Heart left ventricle (tissue), 16 donors: ENCODE measurements at regions of chr1 and their contacts with region 1.

Region 1: DNA sequence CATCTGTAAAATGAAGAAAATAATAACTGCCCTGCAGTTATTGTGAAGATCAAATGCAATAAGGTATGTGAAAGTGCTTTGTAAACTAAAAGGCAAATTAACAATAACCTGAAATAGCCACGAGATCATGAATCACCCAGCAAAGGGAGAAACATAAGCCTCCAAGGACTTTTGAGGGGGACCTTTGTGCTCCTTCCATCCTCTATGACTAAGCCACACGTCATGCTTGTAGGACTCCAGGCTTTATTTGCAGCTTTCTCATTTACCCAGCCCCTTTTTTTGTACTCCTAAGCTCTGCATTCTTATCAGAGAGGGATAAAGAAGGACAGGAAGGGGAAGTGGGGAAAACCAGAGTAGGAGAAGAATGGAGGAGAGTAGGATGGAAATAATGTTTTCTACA is 115.1 kb downstream of the PROX1 start:
- DNase-seq: no peak
- ATAC-seq: no peak
- H3K4me3 ChIP-seq: no peak overlapping the region
- H3K27ac ChIP-seq: no peak overlapping the region
- H3K4me1 ChIP-seq: peaks cover 0 to 25% (median 3%) of the 10 kb centered on the region in 12 donors
- H3K27me3 ChIP-seq: peaks cover 0 to 3% (median 0%) of the 10 kb centered on the region in 9 donors
- CTCF ChIP-seq: no peak
- POLR2A ChIP-seq: no peak

Region 2: DNA sequence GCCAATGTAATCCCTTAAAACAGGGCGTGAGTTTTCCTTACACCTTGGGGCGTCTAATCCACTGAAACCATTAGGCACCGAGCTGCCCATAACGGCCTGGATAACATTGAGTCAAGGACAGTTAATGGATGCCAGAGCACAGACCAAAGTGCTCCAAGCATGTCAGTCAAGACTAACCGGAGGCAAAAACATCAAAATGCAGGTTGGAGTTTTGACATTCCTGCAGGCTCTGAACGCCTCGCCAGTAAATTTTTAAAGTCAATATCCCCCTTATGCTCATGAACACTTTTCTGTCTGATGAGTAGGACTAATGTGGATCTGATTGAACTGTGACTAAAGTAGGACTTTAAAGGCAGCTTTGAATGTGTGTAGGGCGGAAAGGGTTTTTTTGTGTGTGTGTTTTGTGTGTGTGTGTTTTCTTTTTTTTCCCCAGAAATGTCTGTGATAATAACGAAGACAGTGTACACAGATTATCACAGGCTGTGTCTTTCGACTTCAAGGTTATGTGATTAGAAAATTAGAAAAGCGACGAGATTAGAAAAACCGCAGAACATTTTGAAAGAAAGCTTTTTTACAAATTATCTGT is 309.3 kb before region 1 on chr1:
- intact Hi-C with region 1: no loop called
- DNase-seq: no peak
- ATAC-seq: no peak
- H3K4me3 ChIP-seq: no peak overlapping the region
- H3K27ac ChIP-seq: no peak overlapping the region
- H3K4me1 ChIP-seq: no peaks in the 10 kb centered on the region
- H3K27me3 ChIP-seq: no peaks in the 10 kb centered on the region
- CTCF ChIP-seq: no peak
- POLR2A ChIP-seq: no peak

Region 3: GRCh38 chr1:213996320-213997037 is 106.4 kb before region 1 on chr1:
- intact Hi-C with region 1: loop called in 1 of 10 experiments (anchors 5 kb)
- DNase-seq: peak in 3 of 5 donors; percentile 48 to 63 (median 62)
- ATAC-seq: peak; percentile 25 to 77 (median 59)
- H3K4me3 ChIP-seq: peak overlapping the region in 9 of 12 donors; percentile 12 to 55 (median 33)
- H3K27ac ChIP-seq: peak overlapping the region in 10 of 12 donors; percentile 0 to 62 (median 44)
- H3K4me1 ChIP-seq: peaks cover 0 to 24% (median 7%) of the 10 kb centered on the region in 12 donors
- H3K27me3 ChIP-seq: no peaks in the 10 kb centered on the region
- CTCF ChIP-seq: no peak
- POLR2A ChIP-seq: no peak

Region 4: GRCh38 chr1:214029796-214030195 is 73.1 kb before region 1 on chr1:
- intact Hi-C with region 1: loop called in 4 of 10 experiments (anchors 1 to 5 kb)
- DNase-seq: peak in 2 of 5 donors; percentile 30 to 35
- ATAC-seq: peak; percentile 77 to 89 (median 85)
- H3K4me3 ChIP-seq: no peak overlapping the region
- H3K27ac ChIP-seq: peak overlapping the region; percentile 77 to 97 (median 92)
- H3K4me1 ChIP-seq: peaks cover 0 to 49% (median 7%) of the 10 kb centered on the region in 12 donors
- H3K27me3 ChIP-seq: no peaks in the 10 kb centered on the region
- CTCF ChIP-seq: no peak
- POLR2A ChIP-seq: no peak

Region 5: DNA sequence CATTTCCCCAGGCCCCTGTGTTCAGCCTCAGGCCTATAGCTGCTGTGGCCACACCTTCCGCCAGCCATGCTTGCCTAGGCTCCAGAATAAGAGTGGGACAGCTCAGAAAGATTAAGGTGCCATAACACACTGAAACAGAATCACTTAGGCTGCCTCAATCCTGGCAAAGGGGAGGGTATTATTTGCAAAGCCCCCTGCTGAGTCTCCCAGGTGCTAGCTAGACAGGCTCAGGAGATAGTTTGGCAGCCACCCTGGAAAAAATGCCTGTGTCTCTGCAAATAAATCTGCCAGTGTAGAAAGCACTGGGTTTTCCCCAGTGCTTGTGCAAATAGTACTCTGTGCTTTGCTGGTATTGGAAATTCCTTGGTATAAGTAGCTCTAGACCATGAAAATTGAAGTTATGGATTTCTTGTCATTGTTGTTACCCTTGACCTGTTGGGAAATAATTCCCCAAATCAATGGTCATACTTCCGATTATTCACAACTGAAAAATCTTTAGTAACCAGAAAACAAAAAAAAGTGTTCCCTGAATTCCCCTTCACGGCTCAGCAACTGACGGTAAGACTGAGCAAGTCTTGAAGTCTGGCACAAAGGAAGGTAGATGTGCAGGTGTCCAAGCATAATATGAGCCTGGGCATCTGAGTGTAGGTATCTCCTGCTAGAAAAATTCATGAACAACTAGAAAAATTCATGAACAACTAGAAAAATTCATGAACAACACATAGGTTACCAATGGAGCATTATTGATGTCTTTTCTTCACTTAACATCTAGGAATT is 58.3 kb before region 1 on chr1:
- intact Hi-C with region 1: loop called in 2 of 10 experiments (anchors 5 to 10 kb)
- DNase-seq: peak in 1 of 5 donors; percentile 58
- ATAC-seq: peak in 2 of 4 donors; percentile 48 to 74
- H3K4me3 ChIP-seq: no peak overlapping the region
- H3K27ac ChIP-seq: peak overlapping the region in 5 of 12 donors; percentile 35 to 66 (median 38)
- H3K4me1 ChIP-seq: peaks cover 0 to 6% (median 0%) of the 10 kb centered on the region in 12 donors
- H3K27me3 ChIP-seq: peaks cover 0 to 3% (median 0%) of the 10 kb centered on the region in 9 donors
- CTCF ChIP-seq: no peak
- POLR2A ChIP-seq: no peak

Region 6: GRCh38 chr1:214050513-214051401 is 52.1 kb before region 1 on chr1:
- intact Hi-C with region 1: loop called in 3 of 10 experiments (anchors 2 to 10 kb)
- DNase-seq: no peak
- ATAC-seq: peak; percentile 37 to 88 (median 69)
- H3K4me3 ChIP-seq: no peak overlapping the region
- H3K27ac ChIP-seq: peak overlapping the region in 4 of 12 donors; percentile 18 to 46 (median 32)
- H3K4me1 ChIP-seq: peaks cover 0 to 7% (median 0%) of the 10 kb centered on the region in 12 donors
- H3K27me3 ChIP-seq: peaks cover 0 to 3% (median 0%) of the 10 kb centered on the region in 9 donors
- CTCF ChIP-seq: no peak
- POLR2A ChIP-seq: no peak